Activated T-helper 2 cell treated with anti-CD3 and anti-CD28 coated beads, Interferon-gamma antibody, Interleukin-2, Interleukin-4, amounts not matched to agents 10 μg/mL and 5 μg/mL and 100 μg/mL, durations not matched to agents 14 hours and 24 hours and 36 hours (primary cell): ENCODE measurements at regions of chr15 and their contacts with region 1.

Region 1: GRCh38 chr15:25850154-25851111 is 12.7 kb downstream of the ATP10A start:
- DNase-seq: peak; percentile 60
- H3K4me3 Mint-ChIP-seq: peak overlapping the region; percentile 92
- H3K27ac Mint-ChIP-seq: peak overlapping the region; percentile 99
- H3K4me1 Mint-ChIP-seq: peaks cover 82% of the 10 kb centered on the region
- H3K27me3 Mint-ChIP-seq: no peaks in the 10 kb centered on the region

Region 2: GRCh38 chr15:24956111-24956838 is 894.2 kb before region 1 on chr15:
- intact Hi-C with region 1: loop called (anchors 10 kb)
- DNase-seq: peak; percentile 64
- H3K4me3 Mint-ChIP-seq: peak overlapping the region; percentile 88
- H3K27ac Mint-ChIP-seq: peak overlapping the region; percentile 91
- H3K4me1 Mint-ChIP-seq: peaks cover 3% of the 10 kb centered on the region
- H3K27me3 Mint-ChIP-seq: no peaks in the 10 kb centered on the region

Region 3: DNA sequence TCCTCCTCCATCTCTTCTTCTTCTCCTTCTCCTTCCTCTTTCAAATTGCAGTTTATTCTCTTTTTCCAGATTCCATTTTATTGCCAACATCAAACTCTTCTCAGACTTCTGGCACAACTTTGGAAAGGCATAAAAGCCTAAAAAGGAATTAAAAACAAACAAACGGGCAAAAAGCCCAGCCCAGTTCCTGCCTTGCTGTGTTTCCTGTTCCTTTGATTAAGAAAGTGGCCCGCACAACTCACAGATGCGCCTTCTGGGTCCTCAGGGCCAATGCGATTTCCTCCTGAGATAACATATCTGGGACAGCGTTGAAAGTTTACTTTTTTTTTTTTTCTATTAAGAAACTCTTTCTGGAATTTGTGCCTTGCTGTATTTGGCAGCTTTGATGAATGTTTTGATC is 252.9 kb before region 1 on chr15:
- intact Hi-C with region 1: no loop called
- DNase-seq: no peak
- H3K4me3 Mint-ChIP-seq: no peak overlapping the region
- H3K27ac Mint-ChIP-seq: no peak overlapping the region
- H3K4me1 Mint-ChIP-seq: no peaks in the 10 kb centered on the region
- H3K27me3 Mint-ChIP-seq: no peaks in the 10 kb centered on the region

Region 4: DNA sequence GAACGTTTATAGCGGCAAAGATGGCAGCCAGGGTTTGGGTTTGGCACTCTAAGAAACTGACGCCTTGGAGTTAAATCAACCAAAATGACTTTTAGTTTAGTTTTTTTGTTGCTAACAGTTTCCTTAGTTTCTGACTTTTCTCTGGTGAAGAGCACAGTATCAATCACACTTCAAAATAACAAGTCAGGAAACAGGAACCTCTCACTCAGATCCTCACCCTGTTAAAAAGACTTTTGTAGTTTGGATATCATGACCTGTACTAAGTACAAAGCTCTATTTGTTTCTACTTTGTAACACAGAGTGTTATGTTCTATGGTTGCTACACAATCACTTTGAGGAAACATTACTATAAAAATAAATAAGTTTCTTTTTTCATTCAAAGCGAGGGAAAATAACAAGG is 38.4 kb before region 1 on chr15:
- intact Hi-C with region 1: loop called (anchors 2 kb)
- DNase-seq: no peak
- H3K4me3 Mint-ChIP-seq: peak overlapping the region; percentile 67
- H3K27ac Mint-ChIP-seq: peak overlapping the region; percentile 82
- H3K4me1 Mint-ChIP-seq: peaks cover 65% of the 10 kb centered on the region
- H3K27me3 Mint-ChIP-seq: no peaks in the 10 kb centered on the region

Region 5: GRCh38 chr15:25832158-25832557 is 18.3 kb before region 1 on chr15:
- intact Hi-C with region 1: loop called (anchors 1 kb)
- DNase-seq: no peak
- H3K4me3 Mint-ChIP-seq: no peak overlapping the region
- H3K27ac Mint-ChIP-seq: peak overlapping the region; percentile 73
- H3K4me1 Mint-ChIP-seq: peaks cover 20% of the 10 kb centered on the region
- H3K27me3 Mint-ChIP-seq: no peaks in the 10 kb centered on the region

Region 6: DNA sequence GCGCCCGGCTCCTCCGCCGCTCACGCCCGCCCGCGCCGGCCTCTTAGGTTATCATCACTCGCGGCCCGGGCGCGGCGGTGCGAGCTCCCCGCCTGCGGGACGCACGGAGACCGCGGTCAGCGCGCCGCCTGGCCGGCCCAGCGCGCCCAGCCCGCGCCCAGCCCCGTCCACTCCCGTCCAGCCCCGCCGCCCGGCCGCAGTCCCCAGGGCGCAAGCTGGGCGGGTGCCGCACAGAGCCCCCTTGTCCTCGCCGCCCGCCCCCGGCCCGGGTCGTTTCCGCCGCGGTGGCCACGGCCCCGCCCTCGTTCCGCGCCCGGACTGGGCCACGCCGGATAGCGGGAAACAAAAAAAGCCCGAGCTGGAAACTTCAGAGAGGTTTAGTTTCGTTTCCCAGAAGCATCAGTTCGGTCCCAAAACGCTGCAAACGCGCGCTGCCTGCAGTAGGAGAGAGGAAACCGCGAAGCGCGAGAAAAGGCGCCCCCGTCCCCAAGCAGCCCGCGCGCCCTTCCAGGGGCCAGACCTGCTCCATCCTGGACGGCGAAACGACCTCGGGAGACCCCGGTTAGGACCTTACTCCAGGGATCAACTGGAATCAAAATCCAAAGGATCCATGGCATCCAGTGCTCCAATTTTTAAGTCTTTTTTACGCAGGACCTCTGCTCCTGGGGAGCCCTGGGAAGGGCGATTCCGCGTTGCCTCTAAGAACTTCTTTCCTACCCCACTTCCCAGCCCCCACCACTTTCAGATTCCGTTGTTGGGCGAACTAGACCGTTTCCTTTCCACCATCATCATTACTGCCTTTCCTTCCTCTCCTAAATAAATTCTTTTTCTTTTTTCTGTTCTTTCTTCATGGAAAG is 12.9 kb after region 1 on chr15 and contains the start of gene ATP10A:
- intact Hi-C with region 1: loop called (anchors 1 kb)
- DNase-seq: peak; percentile 64
- H3K4me3 Mint-ChIP-seq: peak within 1 kb of the TSS; percentile 92
- H3K27ac Mint-ChIP-seq: peak within 1 kb of the TSS; percentile 88
- H3K4me1 Mint-ChIP-seq: peaks cover 37% of the 10 kb centered on the region
- H3K27me3 Mint-ChIP-seq: peaks cover 11% of the 10 kb centered on the region
- total RNA-seq, gene ATP10A: 40.1 and 44.4 TPM in 2 replicates

Region 7: DNA sequence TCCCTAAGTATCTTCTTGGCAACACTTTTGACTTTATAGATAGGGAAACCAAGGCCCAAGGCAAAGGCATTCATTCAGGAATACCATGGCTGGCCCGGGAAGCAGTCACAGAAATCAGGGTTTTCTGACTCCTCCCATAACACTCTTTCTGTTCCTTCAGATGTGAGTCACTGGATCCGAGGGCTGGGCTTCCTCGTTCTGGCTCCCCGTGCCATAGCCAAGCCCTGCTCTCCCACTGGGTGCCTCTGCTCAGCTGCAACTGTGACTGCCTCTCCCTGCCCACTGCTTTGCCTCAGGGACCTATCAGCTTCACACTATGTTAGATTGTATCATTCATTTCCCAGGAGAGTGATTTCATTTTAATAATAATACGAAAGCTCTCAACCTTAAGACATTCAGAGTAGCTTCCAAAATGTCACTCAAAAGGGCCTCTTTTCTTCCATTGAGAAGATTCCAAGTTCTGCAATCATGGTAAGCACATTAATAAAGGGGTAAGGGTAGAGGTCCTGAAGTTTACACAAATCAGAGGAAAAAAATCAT is 872.3 kb after region 1 on chr15:
- intact Hi-C with region 1: no loop called
- DNase-seq: no peak
- H3K4me3 Mint-ChIP-seq: no peak overlapping the region
- H3K27ac Mint-ChIP-seq: no peak overlapping the region
- H3K4me1 Mint-ChIP-seq: no peaks in the 10 kb centered on the region
- H3K27me3 Mint-ChIP-seq: no peaks in the 10 kb centered on the region